Activated CD8-positive, alpha-beta T cell treated with anti-CD3 and anti-CD28 coated beads for 36 hours (primary cell): ENCODE measurements at regions of chr17 and their contacts with region 1.

Region 1: GRCh38 chr17:41548844-41549595 is 20.9 kb upstream of the KRT19 start:
- DNase-seq: peak; percentile 93
- ATAC-seq: peak; percentile 86
- H3K4me3 Mint-ChIP-seq: peak overlapping the region; percentile 24
- H3K27ac Mint-ChIP-seq: peak overlapping the region; percentile 70
- H3K4me1 Mint-ChIP-seq: peaks cover 20% of the 10 kb centered on the region
- H3K27me3 Mint-ChIP-seq: peaks cover 2% of the 10 kb centered on the region
- CTCF ChIP-seq: peak; percentile 98

Region 2: DNA sequence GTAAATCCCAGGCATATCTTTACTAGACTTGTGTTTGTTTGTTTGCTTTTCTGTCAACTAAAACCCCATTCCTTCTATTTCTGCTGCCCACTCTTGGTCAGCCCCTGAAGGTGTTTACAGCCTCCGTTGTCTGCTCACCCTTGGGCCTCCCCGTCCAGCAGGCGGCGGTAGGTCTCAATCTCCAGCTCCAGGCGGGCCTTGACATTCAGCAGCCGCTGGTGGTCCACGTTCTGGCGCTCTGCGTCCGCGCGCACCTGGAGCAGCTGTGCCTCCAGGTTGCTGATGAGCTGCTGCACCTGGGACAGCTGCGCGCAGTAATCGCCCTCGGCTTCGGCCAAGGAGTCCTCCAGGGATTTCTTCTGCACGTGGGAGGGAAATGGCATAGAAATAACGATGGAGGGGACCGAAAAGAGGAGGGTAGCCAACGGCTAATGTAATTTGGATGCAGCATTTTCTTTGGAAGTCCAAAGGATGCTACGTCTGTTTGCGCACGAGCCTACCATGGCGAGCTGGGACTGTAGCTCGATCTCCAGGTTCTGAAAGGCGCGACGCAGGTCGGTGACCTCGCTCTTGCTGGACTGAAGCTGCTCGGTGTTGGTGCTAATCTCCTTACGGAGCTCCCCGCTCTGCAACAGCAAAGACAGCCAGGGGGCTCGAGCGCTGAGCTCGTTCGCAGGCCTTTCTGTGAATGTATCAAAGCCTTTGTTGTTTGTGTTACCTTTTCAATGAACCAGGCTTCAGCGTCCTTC is 685.9 kb before region 1 on chr17:
- CTCF ChIA-PET with region 1: interaction called, 10 read pairs
- POLR2A ChIA-PET with region 1: no interaction called
- intact Hi-C with region 1: no loop called
- DNase-seq: peak; percentile 44
- ATAC-seq: no peak
- H3K4me3 Mint-ChIP-seq: no peak overlapping the region
- H3K27ac Mint-ChIP-seq: no peak overlapping the region
- H3K4me1 Mint-ChIP-seq: no peaks in the 10 kb centered on the region
- H3K27me3 Mint-ChIP-seq: peaks cover 10% of the 10 kb centered on the region
- CTCF ChIP-seq: peak; percentile 14

Region 3: GRCh38 chr17:41486809-41487720 is 62.0 kb before region 1 on chr17:
- CTCF ChIA-PET with region 1: interaction called, 13 read pairs
- POLR2A ChIA-PET with region 1: interaction called, 3 read pairs
- intact Hi-C with region 1: no loop called
- DNase-seq: peak; percentile 61
- ATAC-seq: no peak
- H3K4me3 Mint-ChIP-seq: no peak overlapping the region
- H3K27ac Mint-ChIP-seq: no peak overlapping the region
- H3K4me1 Mint-ChIP-seq: peaks cover 2% of the 10 kb centered on the region
- H3K27me3 Mint-ChIP-seq: peaks cover 2% of the 10 kb centered on the region
- CTCF ChIP-seq: peak; percentile 56

Region 4: GRCh38 chr17:41523812-41524211 is 25.2 kb before region 1 on chr17:
- CTCF ChIA-PET with region 1: interaction called, 14 read pairs
- POLR2A ChIA-PET with region 1: no interaction called
- intact Hi-C with region 1: no loop called
- DNase-seq: no peak
- ATAC-seq: no peak
- H3K4me3 Mint-ChIP-seq: no peak overlapping the region
- H3K27ac Mint-ChIP-seq: no peak overlapping the region
- H3K4me1 Mint-ChIP-seq: peaks cover 3% of the 10 kb centered on the region
- H3K27me3 Mint-ChIP-seq: peaks cover 24% of the 10 kb centered on the region
- CTCF ChIP-seq: no peak

Region 5: DNA sequence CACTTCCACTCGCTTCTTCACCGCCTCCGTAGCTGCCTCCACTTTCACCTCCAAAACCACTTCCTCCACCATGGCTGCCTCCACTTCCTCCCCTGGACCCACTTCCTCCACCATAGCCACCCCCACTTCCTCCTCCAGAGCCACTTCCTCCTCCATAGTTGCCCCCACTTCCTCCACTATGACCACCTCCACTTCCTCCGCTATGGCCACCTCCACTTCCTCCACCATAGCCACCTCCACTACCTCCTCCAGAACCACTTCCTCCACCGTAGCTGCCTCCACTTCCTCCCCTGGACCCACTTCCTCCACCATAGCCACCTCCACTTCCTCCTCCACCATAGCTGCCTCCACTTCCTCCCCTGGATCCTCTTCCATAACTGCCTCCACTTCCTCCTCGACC is 18.3 kb after region 1 on chr17:
- CTCF ChIA-PET with region 1: interaction called, 45 read pairs
- POLR2A ChIA-PET with region 1: no interaction called
- intact Hi-C with region 1: no loop called
- DNase-seq: peak; percentile 9
- ATAC-seq: peak; percentile 20
- H3K4me3 Mint-ChIP-seq: no peak overlapping the region
- H3K27ac Mint-ChIP-seq: peak overlapping the region; percentile 65
- H3K4me1 Mint-ChIP-seq: peaks cover 10% of the 10 kb centered on the region
- H3K27me3 Mint-ChIP-seq: peaks cover 21% of the 10 kb centered on the region
- CTCF ChIP-seq: no peak

Region 6: DNA sequence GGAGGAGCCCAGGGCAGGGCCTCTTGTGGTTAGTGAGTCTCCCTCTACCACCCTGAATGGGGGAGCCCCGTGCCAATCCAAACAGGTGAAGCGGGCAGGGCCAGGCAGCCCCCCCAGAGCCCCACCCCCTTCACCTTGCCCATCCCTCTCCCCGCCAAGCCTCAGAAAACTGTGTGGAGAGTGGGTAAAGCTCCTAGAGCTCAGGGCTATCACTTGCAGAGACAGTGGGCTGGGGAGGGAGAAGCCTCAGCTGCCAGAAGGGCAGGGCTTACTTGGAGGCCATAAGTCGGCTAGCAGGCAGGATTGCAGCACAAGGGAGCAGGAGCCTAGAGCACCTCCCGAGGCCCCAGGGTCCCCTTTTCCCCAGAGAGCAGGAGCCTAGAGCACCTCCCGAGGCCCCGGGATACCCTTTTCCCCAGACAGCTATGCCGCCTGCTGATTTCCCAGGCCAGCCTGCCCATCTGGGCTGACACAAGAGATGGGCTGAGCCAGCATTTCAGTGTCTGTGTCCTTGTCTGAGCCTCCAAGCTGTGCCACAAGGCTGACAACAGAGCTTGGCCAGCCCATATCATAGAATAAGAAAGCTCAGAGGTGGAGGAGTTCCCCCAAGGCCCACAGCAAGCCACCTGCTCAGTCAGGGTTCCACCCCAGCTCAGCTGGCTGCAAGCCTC is 44.4 kb after region 1 on chr17:
- CTCF ChIA-PET with region 1: interaction called, 12 read pairs
- POLR2A ChIA-PET with region 1: no interaction called
- intact Hi-C with region 1: no loop called
- DNase-seq: no peak
- ATAC-seq: no peak
- H3K4me3 Mint-ChIP-seq: no peak overlapping the region
- H3K27ac Mint-ChIP-seq: no peak overlapping the region
- H3K4me1 Mint-ChIP-seq: no peaks in the 10 kb centered on the region
- H3K27me3 Mint-ChIP-seq: peaks cover 11% of the 10 kb centered on the region
- CTCF ChIP-seq: no peak

Region 7: DNA sequence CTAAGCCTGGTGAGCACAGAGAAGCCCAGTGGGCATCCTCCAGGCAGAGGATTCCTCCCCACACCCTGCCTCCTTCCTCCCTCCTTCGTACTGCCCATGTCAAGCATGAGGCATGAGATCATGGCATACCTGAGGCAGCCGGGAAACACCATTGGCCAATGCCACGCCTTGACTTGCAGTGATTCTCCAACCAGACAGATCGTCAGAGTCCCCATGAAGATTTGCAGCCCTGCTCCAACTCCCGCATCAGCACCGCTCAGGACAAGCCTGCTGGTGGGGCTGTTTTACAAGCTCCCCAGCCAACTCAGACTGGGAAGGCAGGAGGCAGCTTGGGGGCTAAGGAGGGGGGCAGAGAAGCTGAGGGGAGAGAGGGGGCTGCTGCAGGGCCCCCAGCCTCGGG is 66.4 kb after region 1 on chr17:
- CTCF ChIA-PET with region 1: no interaction called
- POLR2A ChIA-PET with region 1: no interaction called
- intact Hi-C with region 1: no loop called
- DNase-seq: no peak
- ATAC-seq: no peak
- H3K4me3 Mint-ChIP-seq: no peak overlapping the region
- H3K27ac Mint-ChIP-seq: no peak overlapping the region
- H3K4me1 Mint-ChIP-seq: no peaks in the 10 kb centered on the region
- H3K27me3 Mint-ChIP-seq: peaks cover 7% of the 10 kb centered on the region
- CTCF ChIP-seq: no peak